CD8-positive, alpha-beta T cell (primary cell): ENCODE measurements at regions of chr3 and their contacts with region 1.

Region 1: GRCh38 chr3:98522244-98523090 is at the start of gene CLDND1:
- DNase-seq: peak; percentile 90 to 97 (median 95)
- ATAC-seq: peak; percentile 96
- H3K4me3 ChIP-seq: peak within 1 kb of the TSS; percentile 66 to 71
- H3K4me3 Mint-ChIP-seq: peak within 1 kb of the TSS; percentile 95
- H3K27ac ChIP-seq: peak within 1 kb of the TSS; percentile 82 to 86
- H3K27ac Mint-ChIP-seq: peak within 1 kb of the TSS; percentile 97
- H3K4me1 ChIP-seq: peaks cover 25% of the 10 kb centered on the region
- H3K4me1 Mint-ChIP-seq: peaks cover 54% of the 10 kb centered on the region
- H3K27me3 ChIP-seq: no peaks in the 10 kb centered on the region
- H3K27me3 Mint-ChIP-seq: no peaks in the 10 kb centered on the region
- CTCF ChIP-seq: no peak
- total RNA-seq, gene CLDND1: 135 to 146 TPM

Region 2: GRCh38 chr3:97764407-97765238 is 757.8 kb before region 1 on chr3 and contains the start of gene ARL6:
- CTCF ChIA-PET with region 1: no interaction called
- POLR2A ChIA-PET with region 1: no interaction called
- intact Hi-C with region 1: loop called (anchors 1 to 5 kb)
- DNase-seq: peak; percentile 28 to 83 (median 70)
- ATAC-seq: peak; percentile 90
- H3K4me3 ChIP-seq: peak within 1 kb of the TSS; percentile 76 to 88
- H3K4me3 Mint-ChIP-seq: peak within 1 kb of the TSS; percentile 98
- H3K27ac ChIP-seq: peak within 1 kb of the TSS; percentile 64 to 72
- H3K27ac Mint-ChIP-seq: peak within 1 kb of the TSS; percentile 95
- H3K4me1 ChIP-seq: peaks cover 14% of the 10 kb centered on the region
- H3K4me1 Mint-ChIP-seq: peaks cover 34% of the 10 kb centered on the region
- H3K27me3 ChIP-seq: no peaks in the 10 kb centered on the region
- H3K27me3 Mint-ChIP-seq: no peaks in the 10 kb centered on the region
- CTCF ChIP-seq: no peak
- total RNA-seq, gene ARL6: 0.97 to 1.1 TPM

Region 3: DNA sequence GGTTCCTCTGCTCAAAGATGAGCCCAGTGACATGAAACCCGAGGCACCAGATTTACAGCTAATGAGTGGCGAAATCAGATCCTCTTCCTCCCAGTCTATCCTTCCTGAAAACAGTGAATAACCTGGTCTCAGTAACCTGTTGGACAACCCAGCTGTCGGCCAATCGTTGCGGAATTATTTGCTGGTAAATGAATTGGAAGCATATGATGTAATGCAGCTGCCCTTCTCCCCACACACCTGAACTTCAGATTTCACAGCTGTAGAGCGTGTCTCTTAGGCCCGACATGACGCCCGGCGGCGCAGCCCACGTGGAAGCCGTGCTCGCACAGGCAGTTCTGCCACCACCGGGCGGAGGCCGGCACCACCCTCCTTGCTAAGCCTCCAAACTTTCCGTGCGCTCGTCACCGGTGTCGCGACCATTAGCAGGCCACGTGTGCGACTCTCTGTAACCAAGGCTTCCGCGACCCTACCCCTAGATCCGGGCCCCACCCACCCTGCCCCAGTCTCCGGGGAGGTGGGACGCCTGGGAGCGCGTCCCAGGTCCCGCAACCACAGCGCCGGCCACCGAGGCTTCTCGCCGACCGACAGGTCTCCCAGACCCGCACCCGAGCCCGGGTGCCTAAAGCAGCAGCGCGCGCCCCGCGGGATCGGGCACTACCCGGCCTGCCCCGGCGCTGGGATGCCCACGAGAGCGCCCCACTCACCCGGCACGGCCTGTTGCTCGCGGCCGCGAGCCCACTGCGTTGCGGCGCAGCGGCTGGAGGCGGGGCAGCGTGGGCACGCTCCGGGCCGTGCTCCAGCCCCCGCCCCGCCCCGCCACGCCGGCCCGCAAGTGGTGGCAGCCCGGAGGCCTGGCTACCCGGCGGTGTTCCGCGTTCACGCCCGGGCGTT is 550.5 kb before region 1 on chr3 and contains the start of gene RIOX2:
- CTCF ChIA-PET with region 1: no interaction called
- POLR2A ChIA-PET with region 1: no interaction called
- intact Hi-C with region 1: loop called in 1 of 2 experiments (anchors 10 kb)
- DNase-seq: peak; percentile 48 to 87 (median 74)
- ATAC-seq: peak; percentile 91
- H3K4me3 ChIP-seq: peak within 1 kb of the TSS; percentile 44 to 61
- H3K4me3 Mint-ChIP-seq: peak within 1 kb of the TSS; percentile 93
- H3K27ac ChIP-seq: peak within 1 kb of the TSS; percentile 55 to 57
- H3K27ac Mint-ChIP-seq: peak within 1 kb of the TSS; percentile 94
- H3K4me1 ChIP-seq: peaks cover 31% of the 10 kb centered on the region
- H3K4me1 Mint-ChIP-seq: peaks cover 56% of the 10 kb centered on the region
- H3K27me3 ChIP-seq: no peaks in the 10 kb centered on the region
- H3K27me3 Mint-ChIP-seq: no peaks in the 10 kb centered on the region
- CTCF ChIP-seq: no peak
- total RNA-seq, gene RIOX2: 12.1 to 12.2 TPM

Region 4: GRCh38 chr3:98556164-98557130 is 34.0 kb after region 1 on chr3:
- CTCF ChIA-PET with region 1: interaction called, 4 read pairs
- POLR2A ChIA-PET with region 1: interaction called, 18 read pairs
- intact Hi-C with region 1: no loop called
- DNase-seq: peak in 8 of 9 experiments; percentile 31 to 85 (median 64)
- ATAC-seq: peak; percentile 83
- H3K4me3 ChIP-seq: no peak overlapping the region
- H3K4me3 Mint-ChIP-seq: peak overlapping the region; percentile 42
- H3K27ac ChIP-seq: peak overlapping the region in 1 of 2 experiments; percentile 54
- H3K27ac Mint-ChIP-seq: peak overlapping the region; percentile 75
- H3K4me1 ChIP-seq: no peaks in the 10 kb centered on the region
- H3K4me1 Mint-ChIP-seq: peaks cover 69% of the 10 kb centered on the region
- H3K27me3 ChIP-seq: no peaks in the 10 kb centered on the region
- H3K27me3 Mint-ChIP-seq: no peaks in the 10 kb centered on the region
- CTCF ChIP-seq: no peak

Region 5: DNA sequence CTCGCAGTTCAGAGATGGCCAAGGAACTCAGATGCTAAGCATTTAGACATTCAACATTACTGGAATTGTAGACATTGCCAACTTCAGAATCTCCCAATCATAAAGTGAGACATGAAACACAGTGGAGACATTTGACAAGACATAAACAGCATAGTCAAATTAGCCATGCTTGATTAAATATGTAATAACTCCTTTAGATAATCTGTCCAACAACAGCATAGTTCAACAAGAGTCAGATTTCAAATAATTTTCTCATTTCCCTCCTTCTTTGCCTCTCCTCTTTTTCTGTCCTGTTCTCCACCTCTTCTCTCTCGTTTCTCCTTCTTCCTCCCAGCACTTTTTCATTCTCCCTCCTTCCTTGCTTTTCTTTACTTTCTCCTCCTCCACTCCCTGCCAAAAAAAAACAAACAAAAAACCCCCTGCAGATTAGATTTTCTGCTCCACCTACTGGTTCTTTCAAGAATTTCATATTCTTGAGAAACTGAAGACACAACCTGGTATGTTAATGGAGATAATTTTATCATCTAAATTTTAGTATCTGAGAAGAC is 50.8 kb after region 1 on chr3:
- CTCF ChIA-PET with region 1: interaction called, 8 read pairs
- POLR2A ChIA-PET with region 1: interaction called, 4 read pairs
- intact Hi-C with region 1: loop called (anchors 1 to 2 kb)
- DNase-seq: peak in 2 of 9 experiments; percentile 50 to 66
- ATAC-seq: peak; percentile 61
- H3K4me3 ChIP-seq: no peak overlapping the region
- H3K4me3 Mint-ChIP-seq: peak overlapping the region; percentile 16
- H3K27ac ChIP-seq: no peak overlapping the region
- H3K27ac Mint-ChIP-seq: peak overlapping the region; percentile 78
- H3K4me1 ChIP-seq: peaks cover 7% of the 10 kb centered on the region
- H3K4me1 Mint-ChIP-seq: peaks cover 31% of the 10 kb centered on the region
- H3K27me3 ChIP-seq: no peaks in the 10 kb centered on the region
- H3K27me3 Mint-ChIP-seq: no peaks in the 10 kb centered on the region
- CTCF ChIP-seq: peak; percentile 71

Region 6: GRCh38 chr3:98877132-98877531 is 354.7 kb after region 1 on chr3:
- CTCF ChIA-PET with region 1: no interaction called
- POLR2A ChIA-PET with region 1: no interaction called
- intact Hi-C with region 1: no loop called
- DNase-seq: no peak
- ATAC-seq: no peak
- H3K4me3 ChIP-seq: no peak overlapping the region
- H3K4me3 Mint-ChIP-seq: no peak overlapping the region
- H3K27ac ChIP-seq: no peak overlapping the region
- H3K27ac Mint-ChIP-seq: no peak overlapping the region
- H3K4me1 ChIP-seq: no peaks in the 10 kb centered on the region
- H3K4me1 Mint-ChIP-seq: no peaks in the 10 kb centered on the region
- H3K27me3 ChIP-seq: no peaks in the 10 kb centered on the region
- H3K27me3 Mint-ChIP-seq: no peaks in the 10 kb centered on the region
- CTCF ChIP-seq: no peak

Region 7: GRCh38 chr3:98901392-98902350 is 379.2 kb after region 1 on chr3 and contains the start of gene DCBLD2:
- CTCF ChIA-PET with region 1: no interaction called
- POLR2A ChIA-PET with region 1: interaction called, 4 read pairs
- intact Hi-C with region 1: loop called in 1 of 2 experiments (anchors 1 kb)
- DNase-seq: peak; percentile 75 to 96 (median 87)
- ATAC-seq: peak; percentile 97
- H3K4me3 ChIP-seq: peak within 1 kb of the TSS; percentile 62 to 91
- H3K4me3 Mint-ChIP-seq: peak within 1 kb of the TSS; percentile 94
- H3K27ac ChIP-seq: peak within 1 kb of the TSS; percentile 37 to 46
- H3K27ac Mint-ChIP-seq: peak within 1 kb of the TSS; percentile 73
- H3K4me1 ChIP-seq: peaks cover 15% of the 10 kb centered on the region
- H3K4me1 Mint-ChIP-seq: peaks cover 24% of the 10 kb centered on the region
- H3K27me3 ChIP-seq: no peaks in the 10 kb centered on the region
- H3K27me3 Mint-ChIP-seq: peaks cover 11% of the 10 kb centered on the region
- CTCF ChIP-seq: no peak
- total RNA-seq, gene DCBLD2: 1.6 to 1.8 TPM

Region 8: GRCh38 chr3:100254168-100254777 is 1731.8 kb after region 1 on chr3:
- CTCF ChIA-PET with region 1: no interaction called
- POLR2A ChIA-PET with region 1: no interaction called
- intact Hi-C with region 1: loop called in 1 of 2 experiments (anchors 10 kb)
- DNase-seq: peak in 4 of 9 experiments; percentile 15 to 64 (median 36)
- ATAC-seq: peak; percentile 66
- H3K4me3 ChIP-seq: no peak overlapping the region
- H3K4me3 Mint-ChIP-seq: no peak overlapping the region
- H3K27ac ChIP-seq: no peak overlapping the region
- H3K27ac Mint-ChIP-seq: no peak overlapping the region
- H3K4me1 ChIP-seq: no peaks in the 10 kb centered on the region
- H3K4me1 Mint-ChIP-seq: peaks cover 5% of the 10 kb centered on the region
- H3K27me3 ChIP-seq: no peaks in the 10 kb centered on the region
- H3K27me3 Mint-ChIP-seq: no peaks in the 10 kb centered on the region
- CTCF ChIP-seq: peak; percentile 51